Caco-2 (cell line): ENCODE measurements at regions of chr11 and their contacts with region 1.

Region 1: DNA sequence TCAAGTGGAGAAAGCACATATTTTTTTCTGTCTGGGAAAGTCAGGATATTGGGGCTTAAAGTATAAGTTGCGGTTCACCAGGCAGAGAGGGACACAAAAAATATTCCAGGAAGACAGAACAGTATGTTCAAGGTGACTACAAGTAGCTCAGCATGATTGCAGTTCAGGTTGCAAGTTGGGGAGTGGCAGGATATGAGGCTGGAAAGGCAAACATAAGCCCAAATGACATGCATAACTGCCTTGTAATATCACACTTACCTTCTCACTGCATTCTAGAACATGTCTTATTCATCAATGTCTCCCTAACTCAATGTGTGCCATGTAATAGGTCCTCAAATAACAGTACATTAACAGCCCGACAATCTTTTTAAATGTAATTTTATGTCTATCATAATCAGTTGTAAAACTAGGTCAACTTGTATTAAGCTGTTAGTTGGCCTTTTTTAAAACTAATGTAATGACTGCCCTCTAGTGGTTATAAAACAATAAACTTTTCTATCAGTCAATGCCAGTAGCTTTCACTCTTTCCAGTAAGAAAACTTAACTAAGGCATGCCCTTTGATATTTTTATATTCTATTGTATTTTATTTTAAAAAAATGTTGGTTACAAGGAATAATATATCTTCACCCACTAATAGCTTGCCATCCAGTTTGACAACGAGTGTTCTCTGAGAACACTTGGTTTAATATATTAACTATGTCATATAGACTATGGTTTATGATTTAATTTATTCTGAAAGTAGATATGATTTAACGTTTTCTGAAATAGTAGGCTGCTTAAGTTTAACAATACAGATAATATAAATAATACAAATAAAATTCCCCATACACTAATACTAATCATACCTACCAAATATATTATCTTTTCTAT is 39.4 kb upstream of the CFAP300 start:
- DNase-seq: peak; percentile 73 to 85
- H3K4me3 ChIP-seq: no peak overlapping the region
- H3K4me3 Mint-ChIP-seq: peak overlapping the region; percentile 39
- H3K27ac Mint-ChIP-seq: peak overlapping the region; percentile 68
- H3K4me1 ChIP-seq: peaks cover 49% of the 10 kb centered on the region
- H3K4me1 Mint-ChIP-seq: peaks cover 38% of the 10 kb centered on the region
- H3K27me3 ChIP-seq: no peaks in the 10 kb centered on the region
- H3K27me3 Mint-ChIP-seq: no peaks in the 10 kb centered on the region
- CTCF ChIP-seq: peak; percentile 53 to 91

Region 2: DNA sequence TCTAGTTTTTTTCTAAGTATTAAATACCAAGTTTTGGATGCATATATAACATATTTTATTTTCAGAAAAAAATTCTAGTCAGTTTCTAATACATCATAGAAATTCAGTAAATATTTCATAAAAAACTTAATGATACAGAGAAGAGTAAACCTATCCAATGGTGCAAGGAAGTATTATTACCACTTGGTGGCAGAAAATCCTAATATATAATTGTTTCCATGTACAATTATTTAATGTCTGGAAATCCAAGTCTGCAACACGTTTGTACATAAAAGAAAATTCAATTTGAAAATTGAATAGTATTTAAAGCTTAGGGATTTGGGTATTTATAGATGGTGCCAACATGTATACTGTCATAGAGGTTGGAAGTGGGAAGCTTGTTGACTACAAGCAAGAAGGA is 551.0 kb before region 1 on chr11:
- CTCF ChIA-PET with region 1: interaction called, 6 read pairs
- POLR2A ChIA-PET with region 1: no interaction called
- intact Hi-C with region 1: loop called (anchors 1 kb)
- DNase-seq: no peak
- H3K4me3 ChIP-seq: no peak overlapping the region
- H3K4me3 Mint-ChIP-seq: no peak overlapping the region
- H3K27ac Mint-ChIP-seq: no peak overlapping the region
- H3K4me1 ChIP-seq: no peaks in the 10 kb centered on the region
- H3K4me1 Mint-ChIP-seq: no peaks in the 10 kb centered on the region
- H3K27me3 ChIP-seq: no peaks in the 10 kb centered on the region
- H3K27me3 Mint-ChIP-seq: no peaks in the 10 kb centered on the region
- CTCF ChIP-seq: peak; percentile 43 to 72

Region 3: GRCh38 chr11:101866619-101867491 is 140.9 kb before region 1 on chr11:
- CTCF ChIA-PET with region 1: interaction called, 141 read pairs
- POLR2A ChIA-PET with region 1: no interaction called
- intact Hi-C with region 1: loop called (anchors 1 kb)
- DNase-seq: peak; percentile 89 to 91
- H3K4me3 ChIP-seq: no peak overlapping the region
- H3K4me3 Mint-ChIP-seq: peak overlapping the region; percentile 31
- H3K27ac Mint-ChIP-seq: peak overlapping the region; percentile 79
- H3K4me1 ChIP-seq: peaks cover 50% of the 10 kb centered on the region
- H3K4me1 Mint-ChIP-seq: peaks cover 34% of the 10 kb centered on the region
- H3K27me3 ChIP-seq: no peaks in the 10 kb centered on the region
- H3K27me3 Mint-ChIP-seq: no peaks in the 10 kb centered on the region
- CTCF ChIP-seq: no peak

Region 4: GRCh38 chr11:101931692-101932091 is 76.1 kb before region 1 on chr11:
- CTCF ChIA-PET with region 1: interaction called, 30 read pairs
- POLR2A ChIA-PET with region 1: no interaction called
- intact Hi-C with region 1: loop called (anchors 1 kb)
- DNase-seq: no peak
- H3K4me3 ChIP-seq: no peak overlapping the region
- H3K4me3 Mint-ChIP-seq: no peak overlapping the region
- H3K27ac Mint-ChIP-seq: no peak overlapping the region
- H3K4me1 ChIP-seq: no peaks in the 10 kb centered on the region
- H3K4me1 Mint-ChIP-seq: no peaks in the 10 kb centered on the region
- H3K27me3 ChIP-seq: no peaks in the 10 kb centered on the region
- H3K27me3 Mint-ChIP-seq: no peaks in the 10 kb centered on the region
- CTCF ChIP-seq: no peak

Region 5: DNA sequence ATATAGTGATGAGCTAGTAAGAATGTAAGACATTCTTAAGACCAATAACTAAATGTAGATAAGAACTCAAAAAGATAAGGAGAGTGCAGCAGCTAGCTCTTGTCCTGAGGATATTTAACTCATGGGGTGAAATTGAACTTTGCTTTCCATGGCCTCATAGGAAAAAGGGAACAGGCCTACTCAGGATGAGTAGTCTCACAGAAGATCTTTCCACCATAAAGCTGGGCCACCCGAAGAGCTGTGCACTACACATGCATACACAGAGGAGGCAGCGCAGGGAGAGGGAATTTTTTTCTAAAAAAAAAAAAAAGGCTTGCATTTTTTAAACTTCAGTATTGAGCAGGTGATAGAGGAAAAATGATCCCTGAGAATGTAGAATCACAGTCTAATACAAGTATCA is 20.4 kb before region 1 on chr11:
- CTCF ChIA-PET with region 1: interaction called, 21 read pairs
- POLR2A ChIA-PET with region 1: no interaction called
- intact Hi-C with region 1: loop called (anchors 1 kb)
- DNase-seq: peak; percentile 64 to 80
- H3K4me3 ChIP-seq: no peak overlapping the region
- H3K4me3 Mint-ChIP-seq: peak overlapping the region; percentile 24
- H3K27ac Mint-ChIP-seq: peak overlapping the region; percentile 54
- H3K4me1 ChIP-seq: peaks cover 24% of the 10 kb centered on the region
- H3K4me1 Mint-ChIP-seq: peaks cover 20% of the 10 kb centered on the region
- H3K27me3 ChIP-seq: no peaks in the 10 kb centered on the region
- H3K27me3 Mint-ChIP-seq: no peaks in the 10 kb centered on the region
- CTCF ChIP-seq: no peak

Region 6: DNA sequence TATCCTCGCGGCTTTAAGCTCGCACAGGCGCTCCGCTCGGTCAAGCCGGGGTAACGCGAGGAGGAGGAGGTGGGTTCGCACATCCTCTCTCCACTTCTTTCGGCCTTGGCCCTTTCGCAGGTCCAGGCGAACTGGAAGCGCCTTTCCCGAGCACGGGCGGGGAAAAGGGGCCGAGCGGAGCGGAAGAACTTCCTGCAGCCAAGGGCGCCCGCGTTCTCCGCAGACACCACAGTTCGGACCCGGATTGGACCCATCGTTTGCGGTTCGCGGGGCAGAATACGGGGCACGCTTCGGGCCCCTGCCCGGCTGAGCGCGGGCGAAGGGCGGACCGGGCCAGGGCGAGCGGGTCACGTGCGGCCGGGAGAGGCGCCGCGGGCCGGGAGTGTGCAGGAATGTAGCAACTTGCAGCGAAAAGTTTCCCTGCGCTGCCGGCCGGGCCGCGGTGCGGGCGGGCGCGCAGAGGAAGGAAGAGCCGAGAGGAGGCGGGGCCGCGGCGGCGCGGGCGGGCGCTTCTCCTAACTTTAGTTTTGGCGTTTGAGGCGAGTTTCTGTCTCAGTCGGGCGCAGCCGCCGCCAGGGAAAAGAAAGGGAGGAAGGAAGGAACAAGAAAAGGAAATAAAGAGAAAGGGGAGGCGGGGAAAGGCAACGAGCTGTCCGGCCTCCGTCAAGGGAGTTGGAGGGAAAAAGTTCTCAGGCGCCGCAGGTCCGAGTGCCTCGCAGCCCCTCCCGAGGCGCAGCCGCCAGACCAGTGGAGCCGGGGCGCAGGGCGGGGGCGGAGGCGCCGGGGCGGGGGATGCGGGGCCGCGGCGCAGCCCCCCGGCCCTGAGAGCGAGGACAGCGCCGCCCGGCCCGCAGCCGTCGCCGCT is 102.3 kb after region 1 on chr11 and contains the start of gene YAP1:
- CTCF ChIA-PET with region 1: no interaction called
- POLR2A ChIA-PET with region 1: interaction called, 4 read pairs
- intact Hi-C with region 1: loop called (anchors 1 kb)
- DNase-seq: peak; percentile 97 to 99
- H3K4me3 ChIP-seq: peak within 1 kb of the TSS; percentile 96
- H3K4me3 Mint-ChIP-seq: peak within 1 kb of the TSS; percentile 91
- H3K27ac Mint-ChIP-seq: peak within 1 kb of the TSS; percentile 98
- H3K4me1 ChIP-seq: peaks cover 20% of the 10 kb centered on the region
- H3K4me1 Mint-ChIP-seq: peaks cover 16% of the 10 kb centered on the region
- H3K27me3 ChIP-seq: no peaks in the 10 kb centered on the region
- H3K27me3 Mint-ChIP-seq: no peaks in the 10 kb centered on the region
- CTCF ChIP-seq: no peak
- total RNA-seq, gene YAP1: 207 and 227 TPM in 2 replicates

Region 7: DNA sequence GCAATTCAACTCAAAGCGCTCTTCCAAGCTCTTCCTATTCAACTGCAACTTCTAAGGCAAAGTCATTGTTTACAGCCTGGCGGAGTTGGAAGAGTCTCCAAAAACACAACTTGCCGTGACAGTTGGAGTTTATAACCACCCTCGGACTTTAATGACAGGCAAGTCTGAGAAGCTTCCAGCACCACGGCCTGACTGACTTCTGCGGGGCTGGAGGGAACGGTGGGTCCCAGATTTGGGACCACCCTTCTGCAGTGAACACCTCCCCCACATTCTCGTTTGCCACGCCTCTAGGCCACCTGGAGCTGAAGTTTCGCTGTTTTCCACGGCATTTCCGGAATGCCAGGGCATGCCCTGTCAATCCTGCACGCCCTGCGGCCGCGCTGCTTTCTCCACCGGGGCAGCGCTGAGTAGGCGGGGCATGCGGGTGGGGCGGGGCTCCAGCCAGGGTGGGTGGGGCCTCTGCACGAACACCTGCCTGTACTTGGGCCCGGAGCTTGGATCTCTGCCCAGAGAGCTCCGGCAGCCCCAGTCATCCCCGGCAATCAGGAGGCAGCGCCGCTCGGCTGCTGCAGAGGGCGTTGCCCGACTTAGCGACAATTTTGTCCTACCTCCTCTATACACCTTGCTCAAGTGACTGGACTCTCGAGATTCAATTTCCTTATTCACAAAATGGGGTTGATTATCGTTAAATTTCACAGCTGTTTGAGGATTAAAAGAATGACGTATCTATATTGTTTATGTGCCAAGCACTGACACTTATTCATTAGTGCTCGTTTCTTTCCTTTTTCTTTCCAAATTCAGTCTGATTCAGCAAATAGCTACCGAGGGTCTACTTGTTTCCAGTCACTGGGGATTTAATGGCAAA is 260.8 kb after region 1 on chr11:
- CTCF ChIA-PET with region 1: interaction called, 15 read pairs
- POLR2A ChIA-PET with region 1: no interaction called
- intact Hi-C with region 1: loop called (anchors 1 kb)
- DNase-seq: peak; percentile 97 to 98
- H3K4me3 ChIP-seq: peak overlapping the region; percentile 67
- H3K4me3 Mint-ChIP-seq: peak overlapping the region; percentile 90
- H3K27ac Mint-ChIP-seq: peak overlapping the region; percentile 79
- H3K4me1 ChIP-seq: peaks cover 33% of the 10 kb centered on the region
- H3K4me1 Mint-ChIP-seq: peaks cover 33% of the 10 kb centered on the region
- H3K27me3 ChIP-seq: no peaks in the 10 kb centered on the region
- H3K27me3 Mint-ChIP-seq: no peaks in the 10 kb centered on the region
- CTCF ChIP-seq: peak; percentile 61 to 97